ENCODE measurements at regions of chr7 and their contacts with region 1.

Region 1: DNA sequence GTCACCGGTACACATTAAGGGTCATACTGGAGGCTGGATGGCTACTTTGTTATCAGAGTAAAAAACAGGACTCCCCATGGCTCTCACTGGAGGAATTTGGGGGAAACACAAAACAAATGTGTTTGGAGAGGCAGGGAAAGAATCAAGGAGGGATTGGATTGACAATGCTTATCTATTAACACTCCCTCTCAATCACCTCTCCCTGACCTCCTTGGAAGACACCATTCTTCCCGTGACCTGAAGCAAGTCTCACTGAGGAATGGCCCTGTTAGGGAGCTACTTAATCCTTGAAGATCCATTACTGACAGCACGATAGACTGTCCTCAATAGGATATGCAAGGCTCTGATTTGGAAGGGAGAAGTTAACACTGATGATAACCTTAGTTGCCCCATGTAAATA is 242.1 kb upstream of the PTN start:
- DNase-seq: no peak
- H3K4me3 ChIP-seq: no peak overlapping the region
- H3K27me3 ChIP-seq: no peaks in the 10 kb centered on the region
- CTCF ChIP-seq: no peak

Region 2: DNA sequence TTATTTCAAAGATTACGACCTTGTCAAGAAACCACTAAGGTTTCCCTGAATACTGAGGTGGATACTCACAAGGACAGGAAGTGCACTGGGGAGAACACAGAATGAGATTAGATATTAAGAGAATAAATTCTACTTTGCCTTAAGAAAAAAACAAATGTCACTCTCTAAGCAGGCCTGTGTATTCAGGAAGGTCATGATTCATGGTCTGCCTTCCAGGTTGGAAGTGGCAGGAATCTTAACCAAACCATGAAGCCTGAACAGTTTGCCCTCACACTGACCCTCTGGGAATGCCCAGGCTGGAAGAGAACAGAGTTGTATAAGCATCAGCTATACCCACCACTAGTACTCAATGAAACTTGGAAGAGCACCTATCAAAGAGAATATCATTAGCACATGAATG is 33.6 kb after region 1 on chr7:
- CTCF ChIA-PET with region 1: interaction called, 3 read pairs
- POLR2A ChIA-PET with region 1: interaction called, 10 read pairs
- DNase-seq: no peak
- H3K4me3 ChIP-seq: no peak overlapping the region
- H3K27me3 ChIP-seq: no peaks in the 10 kb centered on the region
- CTCF ChIP-seq: no peak

Region 3: DNA sequence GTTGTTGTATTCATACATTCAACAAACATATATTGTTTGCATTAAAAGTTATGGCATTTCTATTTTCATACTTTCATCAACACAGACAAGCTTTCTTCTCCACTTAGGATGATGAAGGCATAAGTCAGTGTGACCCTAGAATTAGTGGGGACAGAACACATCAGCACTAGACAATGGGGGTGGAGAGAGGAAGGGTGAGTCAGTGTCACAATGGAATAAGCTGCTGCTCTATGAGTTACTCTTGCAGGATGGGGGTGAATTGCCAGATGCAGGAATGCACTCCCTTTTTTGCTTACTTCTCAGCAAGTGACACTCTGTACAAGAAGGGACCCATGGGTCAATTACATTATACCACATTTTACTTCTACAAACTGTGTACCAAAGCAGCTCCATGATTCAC is 187.2 kb after region 1 on chr7:
- CTCF ChIA-PET with region 1: no interaction called
- POLR2A ChIA-PET with region 1: no interaction called
- DNase-seq: peak; percentile 73
- H3K4me3 ChIP-seq: no peak overlapping the region
- H3K27me3 ChIP-seq: no peaks in the 10 kb centered on the region
- CTCF ChIP-seq: no peak

Measured in BJ (cell line).